A549 (cell line): ENCODE measurements at regions of chr21 and their contacts with region 1.

Region 1: DNA sequence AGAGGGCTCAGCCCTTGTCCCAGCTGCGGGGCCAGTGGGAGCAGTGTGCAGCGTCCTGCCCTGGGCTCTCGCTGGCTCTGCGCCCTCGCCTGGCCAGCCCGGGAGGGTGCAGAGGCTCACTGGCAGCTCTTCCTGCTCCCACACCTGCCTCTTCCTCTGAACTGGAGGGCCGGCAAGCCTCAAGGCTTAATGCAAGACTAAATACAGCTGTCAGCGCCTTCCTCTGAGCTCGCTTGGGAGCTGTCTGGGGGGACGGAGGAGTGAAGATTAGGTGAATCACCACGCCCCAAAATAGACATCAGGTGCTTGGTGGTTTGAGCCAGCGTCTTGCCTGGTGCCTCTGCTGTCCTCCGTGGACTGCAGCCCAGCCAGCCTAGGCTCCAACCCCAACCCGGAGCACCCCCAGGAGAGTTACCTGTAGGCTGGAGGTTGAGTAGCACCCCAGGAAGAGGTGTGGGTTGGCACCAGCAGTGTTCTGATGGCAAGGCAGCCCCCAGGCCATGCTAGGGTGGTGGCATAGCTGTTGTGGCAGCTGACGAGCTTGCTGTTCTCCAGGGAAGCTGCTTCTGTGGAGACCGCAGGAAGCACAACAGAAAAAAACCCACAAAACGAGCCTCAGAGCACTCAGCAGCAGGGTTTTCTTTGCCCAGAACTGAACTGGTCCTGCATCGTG is 36.9 kb downstream of the UMODL1 start:
- DNase-seq: peak; percentile 51 to 76
- ATAC-seq: peak; percentile 96 to 99
- H3K4me3 ChIP-seq: no peak overlapping the region
- H3K27ac ChIP-seq: no peak overlapping the region
- H3K4me1 ChIP-seq: no peaks in the 10 kb centered on the region
- CTCF ChIP-seq: peak; percentile 50
- EP300 ChIP-seq: no peak
- POLR2A ChIP-seq: no peak
- RAD21 ChIP-seq: peak; percentile 61 to 64

Region 2: DNA sequence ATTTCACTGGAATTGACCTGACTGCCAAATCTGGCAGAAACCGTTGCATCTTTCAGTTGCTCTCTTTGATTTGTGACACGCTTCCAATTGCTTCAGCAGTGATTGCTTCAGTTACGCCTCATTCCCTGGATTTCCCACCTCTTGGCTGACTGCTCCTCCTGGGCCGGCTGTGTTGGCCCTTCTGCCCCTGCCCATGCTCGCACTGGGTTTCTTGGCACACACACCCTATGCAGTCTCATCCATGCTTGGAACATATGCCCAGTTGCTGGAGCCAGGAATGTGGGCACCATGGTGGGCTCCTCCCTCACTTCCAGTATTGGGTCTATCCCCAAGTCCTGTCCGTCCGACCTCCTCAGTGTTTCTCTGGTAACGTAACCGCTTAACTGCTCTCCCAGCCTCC is 95.7 kb before region 1 on chr21:
- CTCF ChIA-PET with region 1: interaction called, 10 read pairs
- POLR2A ChIA-PET with region 1: no interaction called
- DNase-seq: no peak
- ATAC-seq: no peak
- H3K4me3 ChIP-seq: no peak overlapping the region
- H3K27ac ChIP-seq: no peak overlapping the region
- H3K4me1 ChIP-seq: peaks cover 9% of the 10 kb centered on the region; the same call in 2 of the 3 replicates
- CTCF ChIP-seq: no peak
- EP300 ChIP-seq: no peak
- POLR2A ChIP-seq: no peak
- RAD21 ChIP-seq: no peak

Region 3: DNA sequence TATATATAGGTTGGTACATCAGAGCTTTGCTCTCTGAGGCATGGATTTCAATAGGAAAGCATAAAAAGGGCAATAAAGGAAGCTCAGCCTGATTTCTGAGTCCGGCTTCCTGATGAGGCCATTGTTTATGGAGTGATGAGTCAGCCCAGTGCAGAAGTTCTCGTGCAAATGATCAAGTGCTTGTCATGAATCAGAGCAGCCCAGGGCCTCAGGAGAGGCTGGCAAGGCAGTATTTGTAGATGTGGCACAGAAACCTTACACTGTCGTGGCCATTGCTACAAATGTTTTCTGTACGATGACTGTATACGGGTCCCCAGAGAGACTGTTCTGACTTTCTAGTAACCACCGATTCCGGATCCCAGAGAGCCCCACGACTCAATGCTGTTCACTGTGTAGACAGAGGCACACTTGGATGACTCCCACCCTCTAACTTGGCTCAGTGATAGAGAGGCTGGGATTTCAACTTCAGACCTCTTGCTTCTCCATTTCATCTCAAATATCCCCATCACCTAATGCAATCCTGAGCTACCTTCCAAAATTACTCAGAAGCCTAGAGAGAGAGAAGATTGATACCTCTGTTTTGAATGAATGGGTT is 10.1 kb before region 1 on chr21:
- CTCF ChIA-PET with region 1: interaction called, 38 read pairs
- POLR2A ChIA-PET with region 1: no interaction called
- DNase-seq: peak; percentile 84
- ATAC-seq: peak; percentile 96 to 98
- H3K4me3 ChIP-seq: no peak overlapping the region
- H3K27ac ChIP-seq: peak overlapping the region; percentile 71 to 75
- H3K4me1 ChIP-seq: peaks cover 11% of the 10 kb centered on the region
- CTCF ChIP-seq: no peak
- EP300 ChIP-seq: no peak
- POLR2A ChIP-seq: no peak
- RAD21 ChIP-seq: no peak

Region 4: GRCh38 chr21:42187976-42188653 is 80.1 kb after region 1 on chr21:
- CTCF ChIA-PET with region 1: no interaction called
- POLR2A ChIA-PET with region 1: no interaction called
- DNase-seq: no peak
- ATAC-seq: no peak
- H3K4me3 ChIP-seq: no peak overlapping the region
- H3K27ac ChIP-seq: no peak overlapping the region
- H3K4me1 ChIP-seq: no peaks in the 10 kb centered on the region
- CTCF ChIP-seq: no peak
- EP300 ChIP-seq: no peak
- POLR2A ChIP-seq: no peak
- RAD21 ChIP-seq: no peak

Region 5: GRCh38 chr21:42513985-42514882 is 406.2 kb after region 1 on chr21:
- CTCF ChIA-PET with region 1: no interaction called
- POLR2A ChIA-PET with region 1: no interaction called
- DNase-seq: peak; percentile 21 to 28
- ATAC-seq: peak; percentile 67 to 81
- H3K4me3 ChIP-seq: peak overlapping the region; percentile 50
- H3K27ac ChIP-seq: peak overlapping the region; percentile 64 to 93
- H3K4me1 ChIP-seq: peaks cover 32% of the 10 kb centered on the region
- CTCF ChIP-seq: no peak
- EP300 ChIP-seq: no peak
- POLR2A ChIP-seq: no peak
- RAD21 ChIP-seq: no peak